ENCODE measurements at regions of chr12 and their contacts with region 1.

Region 1: GRCh38 chr12:22334410-22335290 is at the start of gene ST8SIA1:
- DNase-seq: peak; percentile 29 to 41
- H3K4me3 ChIP-seq: peak within 1 kb of the TSS; percentile 19 to 80 (median 43)
- H3K27ac ChIP-seq: peak within 1 kb of the TSS in 2 of 3 donors; percentile 44 to 70
- H3K4me1 ChIP-seq: peaks cover 4 to 6% of the 10 kb centered on the region in 2 donors
- H3K27me3 ChIP-seq: no peaks in the 10 kb centered on the region
- CTCF ChIP-seq: no peak
- POLR2A ChIP-seq: no peak
- total RNA-seq, gene ST8SIA1: 2.5 to 5.2 (median 4.9) TPM

Region 2: DNA sequence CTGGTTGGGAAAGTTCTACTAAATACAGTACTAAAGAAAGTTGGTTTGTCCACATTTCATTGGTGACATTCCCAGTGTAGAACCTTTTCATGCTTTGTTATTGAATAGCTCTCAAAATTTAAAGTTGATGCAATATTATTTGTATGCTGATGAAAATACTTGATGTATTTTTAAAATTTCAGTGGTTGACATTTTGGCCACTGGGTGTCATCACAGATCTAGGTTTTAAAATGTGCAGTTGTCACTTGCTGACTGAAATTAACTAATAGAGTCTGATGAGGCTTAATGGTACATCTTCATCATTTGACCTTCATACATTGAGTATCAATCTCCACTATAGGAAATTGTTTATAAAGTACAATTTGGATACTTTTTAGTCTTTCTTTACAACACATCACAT is 251.5 kb before region 1 on chr12:
- intact Hi-C with region 1: loop called (anchors 5 kb)
- DNase-seq: no peak
- H3K4me3 ChIP-seq: no peak overlapping the region
- H3K27ac ChIP-seq: no peak overlapping the region
- H3K4me1 ChIP-seq: no peaks in the 10 kb centered on the region
- H3K27me3 ChIP-seq: no peaks in the 10 kb centered on the region
- CTCF ChIP-seq: peak in 5 of 6 experiments; percentile 14 to 78 (median 51)
- POLR2A ChIP-seq: no peak

Region 3: GRCh38 chr12:22100958-22101748 is 233.5 kb before region 1 on chr12:
- intact Hi-C with region 1: loop called (anchors 5 kb)
- DNase-seq: peak in 1 of 2 donors; percentile 33
- H3K4me3 ChIP-seq: no peak overlapping the region
- H3K27ac ChIP-seq: no peak overlapping the region
- H3K4me1 ChIP-seq: no peaks in the 10 kb centered on the region
- H3K27me3 ChIP-seq: no peaks in the 10 kb centered on the region
- CTCF ChIP-seq: peak in 4 of 6 experiments; percentile 13 to 49 (median 36)
- POLR2A ChIP-seq: no peak

Region 4: DNA sequence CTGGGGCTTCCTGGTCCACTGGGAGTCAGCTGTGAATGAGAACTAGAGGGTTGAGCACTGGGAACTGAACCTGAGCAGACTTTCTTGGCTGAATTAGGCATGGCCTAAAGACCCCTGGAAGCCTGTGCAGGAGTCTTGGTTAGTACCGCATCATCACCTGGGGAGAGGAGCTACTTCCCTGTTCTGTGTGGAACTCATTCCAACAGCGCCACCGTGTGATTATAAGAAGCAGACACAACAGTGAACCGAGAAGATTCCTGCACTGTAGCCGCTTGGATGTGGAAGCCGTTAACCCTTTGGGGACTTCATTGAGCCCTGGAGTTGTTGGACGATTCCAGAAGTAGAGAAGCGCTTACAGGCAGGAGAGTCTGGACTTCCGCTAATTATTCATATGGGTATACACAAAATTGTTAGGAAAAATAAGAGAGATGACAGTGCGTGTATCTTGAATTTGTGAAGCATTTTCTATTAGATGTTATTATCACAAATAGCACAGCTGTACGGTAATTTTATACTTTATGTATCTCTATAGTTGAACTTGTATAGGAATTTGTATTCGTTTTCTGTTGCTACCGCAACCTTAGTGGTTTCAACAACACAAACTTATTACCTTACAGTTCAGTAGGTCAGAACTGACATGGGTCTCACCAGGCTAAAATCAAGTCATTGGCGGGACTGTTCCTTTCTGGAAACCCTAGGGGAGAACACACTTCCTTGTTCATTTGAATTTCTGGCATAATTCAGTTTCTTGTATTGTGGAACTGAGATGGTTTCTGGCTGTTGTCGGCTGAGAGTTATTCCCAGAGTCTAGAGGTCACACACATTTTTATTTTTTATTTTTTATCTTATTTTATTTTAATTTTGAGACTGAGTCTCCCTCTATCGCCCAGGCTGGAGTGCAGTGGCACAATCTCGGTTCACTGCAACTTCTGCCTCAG is 109.0 kb after region 1 on chr12:
- intact Hi-C with region 1: loop called (anchors 10 kb)
- DNase-seq: peak; percentile 60 to 70
- H3K4me3 ChIP-seq: no peak overlapping the region
- H3K27ac ChIP-seq: no peak overlapping the region
- H3K4me1 ChIP-seq: no peaks in the 10 kb centered on the region
- H3K27me3 ChIP-seq: no peaks in the 10 kb centered on the region
- CTCF ChIP-seq: peak in 5 of 6 experiments; percentile 37 to 89 (median 78)
- POLR2A ChIP-seq: no peak

Region 5: GRCh38 chr12:23415180-23415579 is 1080.5 kb after region 1 on chr12:
- intact Hi-C with region 1: no loop called
- DNase-seq: no peak
- H3K4me3 ChIP-seq: no peak overlapping the region
- H3K27ac ChIP-seq: no peak overlapping the region
- H3K4me1 ChIP-seq: no peaks in the 10 kb centered on the region
- H3K27me3 ChIP-seq: no peaks in the 10 kb centered on the region
- CTCF ChIP-seq: no peak
- POLR2A ChIP-seq: no peak

Measured in thyroid gland (tissue), 4 donors.